Activated B cell treated with CpG ODN at 0.5 μM for 24 hours (primary cell): ENCODE measurements at regions of chr16 and their contacts with region 1.

Region 1: GRCh38 chr16:48432136-48432535 is 46.9 kb upstream of the SIAH1 start:
- DNase-seq: peak; percentile 27
- ATAC-seq: peak; percentile 81
- H3K4me3 Mint-ChIP-seq: peak overlapping the region; percentile 78
- H3K27ac Mint-ChIP-seq: peak overlapping the region; percentile 99
- H3K4me1 Mint-ChIP-seq: peaks cover 78% of the 10 kb centered on the region
- H3K27me3 Mint-ChIP-seq: no peaks in the 10 kb centered on the region
- CTCF ChIP-seq: no peak

Region 2: GRCh38 chr16:48385272-48386150 is 46.6 kb before region 1 on chr16 and contains the start of gene SIAH1:
- CTCF ChIA-PET with region 1: no interaction called
- POLR2A ChIA-PET with region 1: interaction called, 34 read pairs
- intact Hi-C with region 1: loop called (anchors 1 kb)
- DNase-seq: peak; percentile 97
- ATAC-seq: peak; percentile 80
- H3K4me3 Mint-ChIP-seq: peak within 1 kb of the TSS; percentile 93
- H3K27ac Mint-ChIP-seq: peak within 1 kb of the TSS; percentile 90
- H3K4me1 Mint-ChIP-seq: peaks cover 33% of the 10 kb centered on the region
- H3K27me3 Mint-ChIP-seq: no peaks in the 10 kb centered on the region
- CTCF ChIP-seq: no peak
- total RNA-seq, gene SIAH1: 26.9 and 31.5 TPM in 2 replicates

Region 3: DNA sequence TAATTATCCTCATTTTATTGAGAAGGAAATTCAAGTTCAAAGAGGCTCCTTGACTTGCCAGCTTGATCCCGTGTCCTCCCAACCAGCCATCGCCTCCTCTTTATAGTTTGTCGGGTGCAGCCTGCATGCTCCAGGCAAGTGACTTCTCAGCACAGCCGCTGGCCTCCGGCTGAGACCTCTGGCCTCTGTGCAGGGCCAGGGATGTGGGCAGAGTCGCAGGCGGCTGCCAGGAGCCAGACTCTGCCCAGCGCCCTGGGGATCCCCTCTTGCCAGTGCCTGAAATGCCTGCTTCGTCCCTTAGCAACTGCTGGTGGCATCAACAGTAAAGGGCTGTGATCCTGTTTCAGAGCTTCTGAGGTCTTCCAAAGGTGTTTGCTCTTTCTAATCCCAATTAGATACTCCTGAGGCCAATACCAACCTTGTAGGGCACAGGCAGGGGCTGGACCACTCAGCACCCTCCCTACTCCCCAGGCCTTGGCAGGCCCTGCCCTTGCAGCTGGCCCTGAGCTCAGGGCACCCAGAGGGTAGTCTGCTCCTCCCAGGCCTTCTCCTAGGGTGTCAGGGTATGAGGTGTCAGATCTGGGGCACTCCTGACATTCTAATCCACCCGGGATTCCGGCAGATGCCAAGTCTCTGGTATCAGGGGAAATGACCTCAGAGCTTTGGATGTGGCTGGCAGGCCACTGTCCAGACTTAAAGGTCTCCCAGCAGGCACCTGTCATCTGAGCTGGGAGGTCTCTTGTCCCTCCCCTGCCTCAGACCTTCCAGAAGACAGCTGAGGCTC is 21.0 kb after region 1 on chr16:
- CTCF ChIA-PET with region 1: no interaction called
- POLR2A ChIA-PET with region 1: interaction called, 15 read pairs
- intact Hi-C with region 1: loop called (anchors 1 kb)
- DNase-seq: no peak
- ATAC-seq: no peak
- H3K4me3 Mint-ChIP-seq: no peak overlapping the region
- H3K27ac Mint-ChIP-seq: no peak overlapping the region
- H3K4me1 Mint-ChIP-seq: peaks cover 30% of the 10 kb centered on the region
- H3K27me3 Mint-ChIP-seq: no peaks in the 10 kb centered on the region
- CTCF ChIP-seq: no peak

Region 4: GRCh38 chr16:48459167-48459566 is 27.0 kb after region 1 on chr16:
- CTCF ChIA-PET with region 1: no interaction called
- POLR2A ChIA-PET with region 1: interaction called, 15 read pairs
- intact Hi-C with region 1: loop called (anchors 1 kb)
- DNase-seq: no peak
- ATAC-seq: no peak
- H3K4me3 Mint-ChIP-seq: peak overlapping the region; percentile 1
- H3K27ac Mint-ChIP-seq: peak overlapping the region; percentile 69
- H3K4me1 Mint-ChIP-seq: peaks cover 64% of the 10 kb centered on the region
- H3K27me3 Mint-ChIP-seq: no peaks in the 10 kb centered on the region
- CTCF ChIP-seq: no peak

Region 5: DNA sequence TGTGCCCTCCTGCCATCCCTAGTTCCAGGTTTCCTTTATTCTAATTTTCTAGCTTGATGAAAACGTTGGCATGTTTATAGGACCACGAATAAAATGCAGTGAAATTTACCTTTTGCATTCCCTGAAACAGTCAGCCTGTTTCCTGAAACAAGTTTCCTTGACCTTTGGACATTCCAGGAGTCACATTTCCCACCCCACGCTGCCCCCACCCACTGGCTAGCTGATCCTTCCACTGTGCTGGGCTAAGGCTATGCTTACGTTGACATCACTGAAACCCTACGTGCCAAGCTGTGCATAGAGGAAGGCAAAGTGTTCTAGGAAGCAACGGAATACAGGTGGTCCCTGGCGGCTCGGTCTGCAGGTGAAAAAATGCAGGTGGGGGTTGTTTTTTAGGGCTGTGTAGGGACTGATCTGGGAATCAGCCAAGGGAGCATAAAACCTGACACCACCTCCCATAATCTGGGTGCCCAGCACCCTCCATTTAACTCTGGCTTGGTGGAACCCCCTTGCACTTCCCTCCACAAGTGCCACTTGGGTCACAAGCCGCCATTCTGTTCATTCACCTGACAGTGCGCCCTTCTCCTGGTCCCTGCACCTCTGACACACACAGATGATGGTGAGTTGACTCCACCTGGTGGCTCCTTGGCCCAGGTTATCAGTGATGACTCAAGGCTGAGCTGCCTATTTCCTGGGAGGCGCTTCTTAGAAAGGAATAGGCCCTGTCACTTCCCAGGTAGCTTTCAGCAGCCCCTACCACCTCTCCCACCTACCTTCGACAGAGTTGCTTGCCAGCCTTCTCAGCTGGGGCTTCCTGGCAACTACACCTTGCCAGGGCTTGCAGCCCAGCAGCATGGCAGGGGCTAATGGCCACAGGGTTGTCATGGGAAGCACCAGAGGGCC is 94.2 kb after region 1 on chr16:
- CTCF ChIA-PET with region 1: interaction called, 3 read pairs
- POLR2A ChIA-PET with region 1: no interaction called
- intact Hi-C with region 1: loop called (anchors 5 kb)
- DNase-seq: no peak
- ATAC-seq: peak; percentile 83
- H3K4me3 Mint-ChIP-seq: no peak overlapping the region
- H3K27ac Mint-ChIP-seq: no peak overlapping the region
- H3K4me1 Mint-ChIP-seq: peaks cover 18% of the 10 kb centered on the region
- H3K27me3 Mint-ChIP-seq: no peaks in the 10 kb centered on the region
- CTCF ChIP-seq: no peak

Region 6: GRCh38 chr16:48556913-48557351 is 124.8 kb after region 1 on chr16:
- CTCF ChIA-PET with region 1: no interaction called
- POLR2A ChIA-PET with region 1: no interaction called
- intact Hi-C with region 1: no loop called
- DNase-seq: no peak
- ATAC-seq: peak; percentile 69
- H3K4me3 Mint-ChIP-seq: no peak overlapping the region
- H3K27ac Mint-ChIP-seq: peak overlapping the region; percentile 15
- H3K4me1 Mint-ChIP-seq: peaks cover 40% of the 10 kb centered on the region
- H3K27me3 Mint-ChIP-seq: no peaks in the 10 kb centered on the region
- CTCF ChIP-seq: no peak